Sigmoid colon (tissue), 7 donors: ENCODE measurements at regions of chr15 and their contacts with region 1.

Region 1: GRCh38 chr15:31326156-31326732 is 391 bp upstream of the KLF13 start:
- DNase-seq: peak; percentile 99
- H3K4me3 ChIP-seq: peak overlapping the region; percentile 75 to 95 (median 82)
- H3K27ac ChIP-seq: peak overlapping the region; percentile 99 to 100 (median 100)
- H3K4me1 ChIP-seq: peaks cover 0 to 40% (median 35%) of the 10 kb centered on the region in 4 donors
- H3K27me3 ChIP-seq: no peaks in the 10 kb centered on the region
- CTCF ChIP-seq: no peak
- EP300 ChIP-seq: peak in 1 of 4 donors; percentile 65
- POLR2A ChIP-seq: peak; percentile 95 to 96

Region 2: DNA sequence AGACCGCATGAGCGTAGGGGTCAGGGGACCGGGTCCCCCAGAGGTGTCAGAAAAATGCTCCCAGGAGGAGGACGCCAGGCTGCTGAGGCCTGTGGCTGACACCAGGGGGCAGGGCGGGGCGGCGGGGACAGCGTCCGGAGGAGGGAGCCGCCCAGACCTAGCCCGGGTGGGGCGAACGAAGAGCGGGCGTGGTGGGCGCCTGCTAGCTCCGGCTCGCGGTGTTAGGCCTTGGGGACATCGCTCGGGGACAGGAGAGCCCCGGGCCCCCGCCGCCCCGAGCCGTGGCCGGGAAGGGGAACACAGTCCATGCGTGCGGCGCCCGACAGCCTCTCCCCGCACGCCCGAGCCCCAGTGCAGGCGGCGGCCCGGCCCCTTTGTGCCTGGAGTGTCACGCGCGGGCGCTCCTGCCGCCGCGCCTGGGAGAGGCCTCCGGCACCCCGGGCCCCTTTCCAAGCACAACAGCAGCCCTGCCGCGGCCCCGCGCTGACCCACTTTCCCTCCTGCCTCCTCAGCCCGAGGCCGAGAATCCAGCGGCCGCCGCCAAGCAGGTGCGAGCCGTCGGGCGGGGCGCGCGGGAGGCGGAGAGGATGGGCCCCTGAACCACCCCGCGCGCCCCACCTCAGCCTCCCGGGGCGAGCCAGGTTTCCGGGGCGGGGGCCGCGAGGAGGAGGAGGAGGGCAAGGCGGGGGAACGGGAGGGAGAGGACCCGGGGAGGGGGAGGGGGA is 110.6 kb before region 1 on chr15:
- intact Hi-C with region 1: loop called (anchors 1 kb)
- DNase-seq: peak; percentile 92
- H3K4me3 ChIP-seq: peak overlapping the region; percentile 47 to 70 (median 64)
- H3K27ac ChIP-seq: peak overlapping the region; percentile 84 to 98 (median 93)
- H3K4me1 ChIP-seq: peaks cover 0 to 28% (median 22%) of the 10 kb centered on the region in 4 donors
- H3K27me3 ChIP-seq: no peaks in the 10 kb centered on the region
- CTCF ChIP-seq: peak; percentile 85 to 93 (median 92)
- EP300 ChIP-seq: no peak
- POLR2A ChIP-seq: no peak

Region 3: DNA sequence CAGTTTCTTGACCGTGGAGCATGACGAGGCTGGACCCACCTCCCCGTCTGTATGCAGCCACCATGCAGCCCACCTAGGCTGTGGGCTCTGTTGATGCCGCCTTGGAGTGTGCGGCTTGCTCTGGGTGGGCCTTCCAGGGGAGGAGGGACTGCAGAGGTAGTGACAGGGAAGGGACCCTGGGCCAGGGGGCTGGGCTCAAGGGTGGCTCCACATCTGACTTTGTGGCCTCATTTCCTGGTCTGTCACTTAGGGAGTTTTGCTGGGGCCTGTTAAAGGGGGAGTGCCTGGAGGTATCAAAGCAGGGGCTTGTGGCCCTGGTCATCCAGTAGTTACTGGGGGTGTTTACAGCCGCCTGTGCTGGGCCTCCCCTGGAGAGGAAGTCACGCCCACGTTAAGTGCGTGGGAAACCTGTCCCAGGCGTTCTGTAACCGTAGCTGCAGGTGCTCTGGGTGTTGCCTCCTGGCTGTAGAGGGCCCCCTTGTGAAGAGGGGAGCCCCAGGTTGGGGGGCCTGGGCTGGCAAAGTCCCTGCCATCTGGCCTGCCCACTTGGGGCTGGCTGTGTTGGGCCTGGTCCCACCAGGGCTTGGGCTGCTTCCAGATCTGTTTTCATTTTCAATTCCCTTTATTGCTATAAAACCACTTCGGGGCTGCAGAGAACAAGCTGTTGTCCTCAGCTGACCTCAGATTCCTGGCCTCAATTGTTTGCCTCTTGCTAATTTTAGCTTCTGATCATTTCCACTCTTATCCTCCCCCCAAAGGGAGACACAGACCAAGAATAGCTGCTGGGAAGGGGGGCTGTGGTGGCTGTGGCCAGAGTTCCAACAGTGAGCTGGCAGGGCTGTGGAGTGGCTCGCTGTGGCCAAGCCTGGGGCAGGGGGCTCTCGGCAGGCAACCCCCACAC is 26.9 kb after region 1 on chr15:
- intact Hi-C with region 1: loop called (anchors 1 kb)
- DNase-seq: peak; percentile 89
- H3K4me3 ChIP-seq: peak overlapping the region in 1 of 4 donors; percentile 2
- H3K27ac ChIP-seq: peak overlapping the region; percentile 81 to 93 (median 82)
- H3K4me1 ChIP-seq: peaks cover 0 to 84% (median 73%) of the 10 kb centered on the region in 4 donors
- H3K27me3 ChIP-seq: no peaks in the 10 kb centered on the region
- CTCF ChIP-seq: no peak
- EP300 ChIP-seq: peak in 3 of 4 donors; percentile 76 to 90 (median 86)
- POLR2A ChIP-seq: no peak

Region 4: DNA sequence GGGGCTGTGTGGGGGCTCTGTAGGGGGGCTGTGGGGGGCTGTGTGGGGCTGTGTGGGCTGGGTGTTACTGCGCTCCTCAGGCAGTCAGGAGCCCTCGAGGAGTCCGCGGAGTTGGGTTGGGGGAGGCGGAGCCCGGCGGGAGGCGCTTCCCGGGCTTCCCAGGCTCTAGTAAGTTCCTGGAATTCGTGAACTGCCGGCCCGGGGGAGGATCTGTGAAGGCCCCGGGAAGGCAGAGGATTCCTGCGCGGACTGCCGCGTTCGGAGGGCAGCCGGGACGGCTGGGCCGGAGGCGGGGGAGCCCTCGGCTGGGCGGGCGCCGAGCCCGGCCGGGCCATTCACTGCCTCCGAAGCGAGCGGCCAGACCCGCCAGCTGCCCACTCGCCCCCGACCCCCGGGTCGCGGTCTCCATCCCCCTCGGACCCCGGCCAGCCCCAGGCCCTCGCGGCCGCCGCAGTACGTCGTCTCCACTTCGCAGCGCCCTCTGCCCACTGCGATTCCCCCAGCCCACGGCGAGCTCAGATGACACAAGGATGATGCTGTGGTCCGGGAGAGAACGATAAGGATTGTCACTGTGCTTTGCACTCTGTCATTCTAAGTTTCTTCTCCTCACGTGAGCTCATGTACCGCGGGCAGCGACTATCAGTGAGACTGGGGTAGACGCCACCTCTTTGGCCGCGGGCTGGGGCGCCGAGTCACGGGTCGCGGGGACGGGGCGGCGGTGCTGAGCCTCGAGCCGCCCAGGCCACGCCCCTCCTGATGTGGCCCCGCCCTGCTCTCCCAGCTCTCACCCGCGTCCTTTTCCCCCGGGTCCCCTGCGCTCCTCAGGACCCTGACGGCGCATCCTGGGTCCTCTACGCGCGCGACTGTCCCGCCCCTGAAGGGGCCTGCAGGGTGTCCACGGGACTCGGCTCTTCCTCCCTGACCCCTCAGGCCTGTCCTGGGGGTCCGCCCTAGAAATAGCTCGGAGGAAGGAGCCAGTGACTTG is 65.7 kb after region 1 on chr15:
- intact Hi-C with region 1: loop called (anchors 2 kb)
- DNase-seq: peak; percentile 94
- H3K4me3 ChIP-seq: peak overlapping the region; percentile 37 to 83 (median 56)
- H3K27ac ChIP-seq: peak overlapping the region; percentile 78 to 94 (median 88)
- H3K4me1 ChIP-seq: peaks cover 0 to 39% (median 31%) of the 10 kb centered on the region in 4 donors
- H3K27me3 ChIP-seq: no peaks in the 10 kb centered on the region
- CTCF ChIP-seq: no peak
- EP300 ChIP-seq: peak in 1 of 4 donors; percentile 28
- POLR2A ChIP-seq: peak; percentile 84 to 85

Region 5: DNA sequence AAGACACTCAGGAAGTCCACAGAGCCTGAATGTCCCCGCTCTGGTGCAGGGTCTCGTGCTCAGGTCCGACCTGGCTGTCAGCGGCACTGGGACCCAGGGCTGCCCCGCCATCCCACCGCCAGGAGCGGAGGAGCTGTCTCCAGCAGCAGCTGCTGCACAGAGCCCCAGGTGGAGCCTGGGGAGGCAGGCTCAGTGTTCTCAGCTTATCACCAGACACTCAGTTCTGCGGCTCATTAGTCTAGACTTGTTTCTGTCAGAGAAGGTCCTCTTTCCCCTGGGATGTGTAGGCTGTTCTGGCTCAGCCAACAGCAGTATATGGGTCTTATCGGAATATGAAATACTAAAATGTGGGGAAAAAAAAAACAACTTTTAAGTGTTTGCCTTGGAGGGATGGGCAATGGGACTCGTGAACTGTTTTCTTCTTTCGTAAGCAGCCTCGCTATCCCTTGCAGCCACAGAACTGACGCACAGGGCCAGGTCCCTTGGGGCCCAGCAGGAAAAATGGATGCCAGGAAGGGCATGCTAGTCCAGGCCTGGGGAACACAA is 76.3 kb after region 1 on chr15:
- intact Hi-C with region 1: no loop called
- DNase-seq: peak; percentile 66
- H3K4me3 ChIP-seq: no peak overlapping the region
- H3K27ac ChIP-seq: peak overlapping the region in 2 of 4 donors; percentile 40 to 44
- H3K4me1 ChIP-seq: peaks cover 0 to 10% (median 7%) of the 10 kb centered on the region in 4 donors
- H3K27me3 ChIP-seq: no peaks in the 10 kb centered on the region
- CTCF ChIP-seq: no peak
- EP300 ChIP-seq: peak in 2 of 4 donors; percentile 2 to 45
- POLR2A ChIP-seq: no peak

Region 6: GRCh38 chr15:31442203-31443111 is 116.2 kb after region 1 on chr15:
- intact Hi-C with region 1: no loop called
- DNase-seq: no peak
- H3K4me3 ChIP-seq: no peak overlapping the region
- H3K27ac ChIP-seq: peak overlapping the region in 2 of 4 donors; percentile 74 to 78
- H3K4me1 ChIP-seq: peaks cover 0 to 19% (median 8%) of the 10 kb centered on the region in 4 donors
- H3K27me3 ChIP-seq: no peaks in the 10 kb centered on the region
- CTCF ChIP-seq: no peak
- EP300 ChIP-seq: no peak
- POLR2A ChIP-seq: no peak

Region 7: DNA sequence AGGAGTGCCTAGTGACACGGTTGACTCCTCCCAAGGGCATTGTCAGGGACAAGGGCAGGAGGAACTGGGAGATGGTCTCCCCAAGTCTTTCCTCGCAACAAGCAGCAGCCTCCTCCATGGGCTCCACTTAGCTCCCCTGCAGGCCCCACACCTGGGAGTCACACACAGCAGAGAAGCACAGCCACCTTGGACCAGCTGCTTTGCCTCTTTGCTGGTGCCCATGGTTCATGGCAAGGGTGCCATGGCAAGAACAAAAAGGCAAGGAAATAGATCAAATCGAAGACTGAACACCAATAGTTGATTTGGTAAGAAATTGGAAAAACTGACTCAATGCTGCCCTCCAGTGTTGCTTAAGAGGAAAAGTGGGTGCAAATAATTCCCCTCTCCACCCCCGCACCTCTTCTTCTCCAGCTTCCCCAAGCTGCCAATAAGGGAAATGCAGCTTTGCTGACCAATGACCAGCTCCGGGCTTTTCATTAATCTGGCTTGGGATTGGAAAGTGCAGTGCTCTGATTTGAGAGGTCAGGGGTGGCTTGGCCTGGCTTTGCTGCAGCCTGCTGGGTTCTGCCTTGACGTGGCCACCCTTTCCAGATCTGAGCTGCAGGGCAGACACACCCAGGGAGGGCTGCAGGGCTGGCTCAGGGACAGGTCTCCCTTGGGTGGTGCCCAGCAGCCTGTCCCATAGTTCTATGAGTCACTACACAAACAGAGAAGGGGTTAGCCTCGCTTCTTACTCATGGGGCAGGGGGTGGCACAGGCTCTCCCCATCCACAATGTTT is 162.4 kb after region 1 on chr15:
- intact Hi-C with region 1: loop called (anchors 1 kb)
- DNase-seq: peak; percentile 87
- H3K4me3 ChIP-seq: no peak overlapping the region
- H3K27ac ChIP-seq: peak overlapping the region in 3 of 4 donors; percentile 26 to 60 (median 45)
- H3K4me1 ChIP-seq: peaks cover 0 to 20% (median 16%) of the 10 kb centered on the region in 4 donors
- H3K27me3 ChIP-seq: peaks cover 0 to 18% (median 5%) of the 10 kb centered on the region in 3 donors
- CTCF ChIP-seq: peak; percentile 77 to 95 (median 84)
- EP300 ChIP-seq: no peak
- POLR2A ChIP-seq: no peak